B cell (primary cell): ENCODE measurements at regions of chr1 and their contacts with region 1.

Region 1: DNA sequence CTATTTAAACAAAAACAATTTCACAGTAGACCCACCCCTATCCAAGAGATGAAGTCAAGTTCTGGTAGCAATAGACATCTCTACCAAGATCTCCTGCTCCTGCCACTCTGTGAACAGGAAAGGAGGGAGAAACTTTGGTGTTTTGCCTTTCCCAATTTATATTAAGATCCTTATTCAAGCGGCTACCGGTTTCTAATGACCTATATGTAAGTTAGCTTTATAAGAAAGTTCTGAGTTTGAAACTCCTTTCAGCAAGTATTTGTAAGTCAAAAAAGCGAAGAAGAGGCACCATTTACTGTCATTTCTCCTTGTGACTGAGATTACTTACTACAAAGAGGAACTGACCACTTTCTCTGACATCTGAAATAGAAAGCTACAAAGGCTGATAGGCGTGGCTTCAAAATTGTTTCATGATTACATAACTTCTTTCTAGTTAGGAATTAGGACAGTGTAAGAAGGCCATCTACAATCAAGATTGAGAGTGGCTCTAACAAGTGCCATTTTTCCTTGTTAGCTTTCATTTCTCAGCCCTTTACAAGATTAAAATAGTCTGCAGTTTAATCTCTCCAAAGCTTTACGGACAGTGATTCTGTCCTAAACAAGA is at the start of gene MNDA:
- DNase-seq: peak; percentile 74
- ATAC-seq: peak; percentile 95
- H3K4me3 ChIP-seq: peak within 1 kb of the TSS; percentile 11 to 86 (median 49)
- H3K4me3 Mint-ChIP-seq: peak within 1 kb of the TSS; percentile 89
- H3K27ac ChIP-seq: peak within 1 kb of the TSS; percentile 72 to 74
- H3K27ac Mint-ChIP-seq: peak within 1 kb of the TSS; percentile 95
- H3K4me1 ChIP-seq: peaks cover 11 to 14% of the 10 kb centered on the region in 2 donors
- H3K4me1 Mint-ChIP-seq: peaks cover 29% of the 10 kb centered on the region
- H3K27me3 ChIP-seq: no peaks in the 10 kb centered on the region
- H3K27me3 Mint-ChIP-seq: no peaks in the 10 kb centered on the region
- CTCF ChIP-seq: no peak
- total RNA-seq, gene MNDA: 8.5 and 10.1 TPM in 2 replicates

Region 2: GRCh38 chr1:159015440-159015909 is 184.5 kb after region 1 on chr1:
- CTCF ChIA-PET with region 1: no interaction called
- POLR2A ChIA-PET with region 1: no interaction called
- intact Hi-C with region 1: loop called (anchors 5 kb)
- DNase-seq: peak; percentile 87
- ATAC-seq: peak; percentile 99
- H3K4me3 ChIP-seq: peak overlapping the region in 4 of 5 experiments; percentile 7 to 100 (median 20)
- H3K4me3 Mint-ChIP-seq: peak overlapping the region; percentile 87
- H3K27ac ChIP-seq: peak overlapping the region; percentile 63 to 72
- H3K27ac Mint-ChIP-seq: peak overlapping the region; percentile 95
- H3K4me1 ChIP-seq: peaks cover 47 to 52% of the 10 kb centered on the region in 2 donors
- H3K4me1 Mint-ChIP-seq: peaks cover 62% of the 10 kb centered on the region
- H3K27me3 ChIP-seq: no peaks in the 10 kb centered on the region
- H3K27me3 Mint-ChIP-seq: no peaks in the 10 kb centered on the region
- CTCF ChIP-seq: no peak